Activated naive CD4-positive, alpha-beta T cell treated with anti-CD3 and anti-CD28 coated beads for 36 hours (primary cell): ENCODE measurements at regions of chr9 and their contacts with region 1.

Region 1: DNA sequence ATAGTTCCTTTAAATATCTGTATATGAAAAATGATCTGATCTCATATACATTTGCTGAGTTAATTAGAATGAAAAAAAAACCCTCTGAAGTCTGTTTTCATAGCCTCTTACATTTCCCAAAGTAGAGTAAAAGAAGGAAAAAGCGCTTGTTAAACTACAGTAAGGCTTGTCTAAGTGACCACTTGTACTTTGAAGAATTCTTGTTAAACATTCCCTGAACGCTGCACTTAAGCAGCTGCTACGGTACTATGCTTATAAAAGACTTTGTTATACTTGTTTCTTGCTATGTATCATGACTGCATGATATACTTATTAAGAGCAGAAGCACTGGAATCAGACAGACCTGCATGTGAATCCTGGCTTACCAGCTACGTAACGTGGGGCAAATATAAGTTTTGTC is 81.7 kb upstream of the MTAP start:
- DNase-seq: no peak
- H3K4me3 Mint-ChIP-seq: no peak overlapping the region
- H3K27ac Mint-ChIP-seq: no peak overlapping the region
- H3K4me1 Mint-ChIP-seq: no peaks in the 10 kb centered on the region
- H3K27me3 Mint-ChIP-seq: peaks cover 8% of the 10 kb centered on the region

Region 2: DNA sequence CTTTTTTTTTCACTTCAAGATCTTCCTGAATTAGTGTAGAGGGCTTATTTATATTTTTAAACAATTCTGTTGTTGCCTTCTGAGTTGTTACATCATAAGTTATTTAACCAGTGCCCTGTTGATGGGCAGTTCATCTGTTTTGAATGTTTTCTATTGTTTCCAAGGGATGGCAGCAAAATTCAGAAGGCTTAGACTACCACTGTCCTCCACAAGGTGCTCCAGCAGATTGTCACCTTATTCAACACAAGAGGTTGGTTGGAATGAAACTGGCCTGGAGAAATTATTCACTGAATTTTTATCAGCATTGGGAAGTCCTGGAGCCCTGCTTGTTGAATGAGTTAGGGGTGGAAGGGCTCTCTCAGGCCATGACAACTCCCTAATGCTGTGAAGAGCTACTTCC is 384.3 kb before region 1 on chr9:
- CTCF ChIA-PET with region 1: no interaction called
- intact Hi-C with region 1: no loop called
- DNase-seq: no peak
- H3K4me3 Mint-ChIP-seq: peak overlapping the region; percentile 53
- H3K27ac Mint-ChIP-seq: no peak overlapping the region
- H3K4me1 Mint-ChIP-seq: peaks cover 38% of the 10 kb centered on the region
- H3K27me3 Mint-ChIP-seq: no peaks in the 10 kb centered on the region

Region 3: GRCh38 chr9:21709464-21710058 is 11.2 kb before region 1 on chr9:
- CTCF ChIA-PET with region 1: interaction called, 11 read pairs
- intact Hi-C with region 1: no loop called
- DNase-seq: peak; percentile 86
- H3K4me3 Mint-ChIP-seq: no peak overlapping the region
- H3K27ac Mint-ChIP-seq: no peak overlapping the region
- H3K4me1 Mint-ChIP-seq: peaks cover 14% of the 10 kb centered on the region
- H3K27me3 Mint-ChIP-seq: no peaks in the 10 kb centered on the region

Region 4: GRCh38 chr9:21800931-21801682 is 80.3 kb after region 1 on chr9:
- CTCF ChIA-PET with region 1: no interaction called
- intact Hi-C with region 1: no loop called
- DNase-seq: no peak
- H3K4me3 Mint-ChIP-seq: peak overlapping the region; percentile 99
- H3K27ac Mint-ChIP-seq: no peak overlapping the region
- H3K4me1 Mint-ChIP-seq: peaks cover 33% of the 10 kb centered on the region
- H3K27me3 Mint-ChIP-seq: peaks cover 9% of the 10 kb centered on the region

Region 5: GRCh38 chr9:21862871-21863270 is 142.1 kb after region 1 on chr9:
- CTCF ChIA-PET with region 1: no interaction called
- intact Hi-C with region 1: no loop called
- DNase-seq: no peak
- H3K4me3 Mint-ChIP-seq: no peak overlapping the region
- H3K27ac Mint-ChIP-seq: no peak overlapping the region
- H3K4me1 Mint-ChIP-seq: no peaks in the 10 kb centered on the region
- H3K27me3 Mint-ChIP-seq: no peaks in the 10 kb centered on the region